PC-9 (cell line): ENCODE measurements at regions of chr6 and their contacts with region 1.

Region 1: DNA sequence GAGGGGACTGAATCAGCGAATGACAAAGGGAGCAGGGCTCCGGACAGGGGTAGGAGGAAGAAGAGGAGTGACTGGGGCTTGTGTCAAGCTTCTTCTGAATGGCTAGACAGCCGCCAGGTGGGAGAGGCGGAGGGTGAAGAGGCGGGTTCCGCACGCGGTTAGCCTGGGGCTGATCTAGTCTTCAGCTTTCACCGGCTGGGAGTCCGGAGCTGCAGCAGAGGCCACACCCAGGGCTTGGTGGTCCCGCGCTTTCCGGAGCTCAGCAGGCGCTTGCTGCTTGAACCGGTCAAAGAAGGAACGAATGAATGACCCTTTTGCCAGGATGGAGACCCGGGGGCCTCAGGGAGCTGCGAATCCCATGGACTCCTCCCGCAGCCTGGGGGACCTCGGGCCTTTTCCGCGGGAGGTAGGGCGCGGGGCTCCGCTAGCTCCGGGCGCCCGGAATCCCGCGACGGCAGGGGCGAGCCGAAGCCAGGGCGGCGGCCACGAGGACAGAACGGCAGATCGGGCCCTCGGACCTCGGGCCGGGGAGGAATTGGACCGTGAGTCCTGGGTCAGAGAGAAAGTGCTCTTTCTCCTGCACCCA is at the start of gene C6orf141:
- DNase-seq: peak; percentile 72 to 83
- H3K4me3 ChIP-seq: peak within 1 kb of the TSS; percentile 82
- H3K27ac ChIP-seq: peak within 1 kb of the TSS; percentile 58
- H3K4me1 ChIP-seq: peaks cover 34% of the 10 kb centered on the region
- H3K27me3 ChIP-seq: no peaks in the 10 kb centered on the region
- CTCF ChIP-seq: no peak
- total RNA-seq, gene C6orf141: 12.3 and 21.9 TPM in 2 replicates

Region 2: GRCh38 chr6:48067148-48067743 is 1483.3 kb before region 1 on chr6:
- CTCF ChIA-PET with region 1: no interaction called
- POLR2A ChIA-PET with region 1: interaction called, 10 read pairs
- intact Hi-C with region 1: no loop called
- DNase-seq: no peak
- H3K4me3 ChIP-seq: no peak overlapping the region
- H3K27ac ChIP-seq: no peak overlapping the region
- H3K4me1 ChIP-seq: no peaks in the 10 kb centered on the region
- H3K27me3 ChIP-seq: no peaks in the 10 kb centered on the region
- CTCF ChIP-seq: no peak

Region 3: DNA sequence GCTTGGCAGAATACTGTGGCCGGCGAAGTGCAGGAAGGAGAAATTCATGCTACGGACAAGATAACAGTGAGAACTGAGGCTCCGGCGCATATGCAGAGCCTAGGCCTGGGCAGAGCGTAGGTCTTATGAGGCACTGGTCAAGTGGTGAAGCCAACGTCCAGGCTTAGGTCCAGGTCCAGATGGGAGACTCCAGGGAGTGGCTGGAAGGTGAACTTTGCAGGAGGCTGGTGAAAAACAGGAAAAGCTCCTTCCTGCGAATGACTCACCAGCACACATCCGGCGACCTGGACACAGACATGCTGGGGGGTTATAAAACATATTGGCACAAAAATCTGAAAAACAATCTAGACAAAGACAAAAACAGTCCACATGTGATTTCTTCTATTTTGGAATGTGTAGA is 15.3 kb after region 1 on chr6:
- CTCF ChIA-PET with region 1: interaction called, 17 read pairs
- POLR2A ChIA-PET with region 1: no interaction called
- intact Hi-C with region 1: no loop called
- DNase-seq: no peak
- H3K4me3 ChIP-seq: no peak overlapping the region
- H3K27ac ChIP-seq: no peak overlapping the region
- H3K4me1 ChIP-seq: peaks cover 17% of the 10 kb centered on the region
- H3K27me3 ChIP-seq: no peaks in the 10 kb centered on the region
- CTCF ChIP-seq: no peak

Region 4: DNA sequence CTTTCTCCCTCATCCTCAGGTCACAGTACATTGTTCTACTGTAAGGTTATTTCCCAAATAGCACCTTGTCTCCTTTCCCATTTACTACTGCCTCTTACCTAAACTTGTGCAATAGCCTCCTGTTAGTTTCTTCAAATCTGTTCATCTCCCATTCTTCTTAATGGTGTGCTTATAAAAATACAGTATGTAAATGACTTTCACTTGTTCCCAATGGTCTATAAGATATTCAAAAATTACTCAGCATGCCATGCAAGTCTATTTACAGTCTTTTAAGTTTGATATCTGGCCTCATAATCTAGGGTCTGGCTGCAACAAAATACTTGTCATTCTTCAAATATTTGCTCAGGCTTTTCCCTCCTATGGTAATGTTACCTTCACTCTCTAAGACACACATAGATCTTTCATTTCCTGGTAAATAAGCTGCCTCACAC is 117.5 kb after region 1 on chr6:
- CTCF ChIA-PET with region 1: interaction called, 4 read pairs
- POLR2A ChIA-PET with region 1: no interaction called
- intact Hi-C with region 1: loop called (anchors 10 kb)
- DNase-seq: peak; percentile 4 to 82
- H3K4me3 ChIP-seq: no peak overlapping the region
- H3K27ac ChIP-seq: peak overlapping the region; percentile 55; the same call in 1 of the 2 replicates
- H3K4me1 ChIP-seq: peaks cover 25% of the 10 kb centered on the region
- H3K27me3 ChIP-seq: no peaks in the 10 kb centered on the region
- CTCF ChIP-seq: no peak

Region 5: GRCh38 chr6:50259903-50260302 is 709.3 kb after region 1 on chr6:
- CTCF ChIA-PET with region 1: no interaction called
- POLR2A ChIA-PET with region 1: no interaction called
- intact Hi-C with region 1: no loop called
- DNase-seq: no peak
- H3K4me3 ChIP-seq: no peak overlapping the region
- H3K27ac ChIP-seq: no peak overlapping the region
- H3K4me1 ChIP-seq: no peaks in the 10 kb centered on the region
- H3K27me3 ChIP-seq: no peaks in the 10 kb centered on the region
- CTCF ChIP-seq: no peak

Region 6: DNA sequence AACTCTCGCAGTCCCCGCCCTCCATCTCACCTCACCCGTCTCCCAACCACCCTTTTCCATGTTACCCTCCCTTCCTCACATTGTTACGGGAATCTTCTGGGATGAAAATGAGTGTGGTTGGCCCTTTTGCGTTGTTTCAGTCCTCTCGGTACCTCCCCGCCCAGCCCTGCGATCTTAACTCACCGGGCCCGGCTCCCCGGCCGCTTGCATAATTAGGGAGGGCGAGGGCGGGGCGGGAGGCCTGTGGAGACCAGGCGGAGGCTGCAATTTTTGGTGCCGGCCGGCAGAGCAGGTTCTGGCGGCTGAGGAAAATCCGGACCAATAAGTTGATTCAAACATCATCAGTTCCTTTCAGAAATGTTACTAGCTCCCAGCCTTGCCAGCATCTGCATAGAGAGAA is 1293.3 kb after region 1 on chr6:
- CTCF ChIA-PET with region 1: no interaction called
- POLR2A ChIA-PET with region 1: no interaction called
- intact Hi-C with region 1: no loop called
- DNase-seq: no peak
- H3K4me3 ChIP-seq: no peak overlapping the region
- H3K27ac ChIP-seq: no peak overlapping the region
- H3K4me1 ChIP-seq: no peaks in the 10 kb centered on the region
- H3K27me3 ChIP-seq: peaks cover 37% of the 10 kb centered on the region; the same call in 1 of the 2 replicates
- CTCF ChIP-seq: no peak